ENCODE measurements at regions of chr15 and their contacts with region 1.

Region 1: DNA sequence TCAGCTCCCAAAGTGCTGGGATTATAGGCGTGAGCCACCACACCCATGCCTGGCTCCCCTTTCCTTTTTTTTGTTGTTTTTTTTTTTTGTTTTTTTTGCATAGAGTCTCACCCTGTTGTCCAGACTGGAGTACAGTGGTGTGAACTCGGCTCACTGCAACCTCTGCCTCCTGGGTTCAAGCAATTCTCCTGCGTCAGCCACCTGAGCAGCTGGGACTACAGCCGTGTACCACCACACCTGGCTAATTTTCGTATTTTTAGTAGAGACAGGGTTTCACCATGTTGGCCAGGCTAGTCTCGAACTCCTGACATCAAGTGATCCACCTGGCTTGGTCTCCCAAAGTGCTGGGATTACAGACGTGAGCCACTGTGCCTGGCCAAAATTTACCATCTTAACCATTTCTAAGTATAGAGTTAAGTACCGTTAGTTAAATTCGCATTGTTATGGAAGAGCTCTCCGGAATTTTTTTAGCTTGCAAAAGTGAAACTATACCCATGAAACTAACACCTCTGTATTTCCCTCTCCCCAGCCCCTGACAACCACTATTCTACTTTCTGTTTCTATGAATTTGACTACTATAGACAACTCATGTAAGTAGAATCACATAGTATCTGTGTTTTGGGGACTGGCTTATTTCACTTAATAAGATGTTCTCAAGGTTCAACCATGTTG is 70.9 kb upstream of the C15orf39 start:
- DNase-seq: peak in 2 of 3 donors; percentile 44 to 76
- H3K4me3 ChIP-seq: peak overlapping the region; percentile 2 to 69 (median 7)
- H3K4me3 Mint-ChIP-seq: peak overlapping the region; percentile 70 to 78
- H3K27ac ChIP-seq: peak overlapping the region; percentile 90 to 91
- H3K27ac Mint-ChIP-seq: peak overlapping the region; percentile 96 to 99 (median 97)
- H3K4me1 ChIP-seq: peaks cover 72 to 81% of the 10 kb centered on the region in 2 donors
- H3K4me1 Mint-ChIP-seq: peaks cover 69% of the 10 kb centered on the region
- H3K27me3 ChIP-seq: no peaks in the 10 kb centered on the region
- H3K27me3 Mint-ChIP-seq: no peaks in the 10 kb centered on the region
- CTCF ChIP-seq: no peak

Region 2: GRCh38 chr15:75104804-75105535 is 25.8 kb before region 1 on chr15:
- intact Hi-C with region 1: loop called (anchors 2 kb)
- DNase-seq: peak; percentile 88 to 95 (median 95)
- H3K4me3 ChIP-seq: peak overlapping the region in 1 of 3 experiments; percentile 26
- H3K4me3 Mint-ChIP-seq: peak overlapping the region; percentile 32 to 44
- H3K27ac ChIP-seq: peak overlapping the region; percentile 77 to 93
- H3K27ac Mint-ChIP-seq: peak overlapping the region; percentile 87 to 97 (median 94)
- H3K4me1 ChIP-seq: peaks cover 53 to 57% of the 10 kb centered on the region in 2 donors
- H3K4me1 Mint-ChIP-seq: peaks cover 61% of the 10 kb centered on the region
- H3K27me3 ChIP-seq: no peaks in the 10 kb centered on the region
- H3K27me3 Mint-ChIP-seq: peaks cover 0 to 5% (median 0%) of the 10 kb centered on the region in 3 donors
- CTCF ChIP-seq: no peak

Region 3: DNA sequence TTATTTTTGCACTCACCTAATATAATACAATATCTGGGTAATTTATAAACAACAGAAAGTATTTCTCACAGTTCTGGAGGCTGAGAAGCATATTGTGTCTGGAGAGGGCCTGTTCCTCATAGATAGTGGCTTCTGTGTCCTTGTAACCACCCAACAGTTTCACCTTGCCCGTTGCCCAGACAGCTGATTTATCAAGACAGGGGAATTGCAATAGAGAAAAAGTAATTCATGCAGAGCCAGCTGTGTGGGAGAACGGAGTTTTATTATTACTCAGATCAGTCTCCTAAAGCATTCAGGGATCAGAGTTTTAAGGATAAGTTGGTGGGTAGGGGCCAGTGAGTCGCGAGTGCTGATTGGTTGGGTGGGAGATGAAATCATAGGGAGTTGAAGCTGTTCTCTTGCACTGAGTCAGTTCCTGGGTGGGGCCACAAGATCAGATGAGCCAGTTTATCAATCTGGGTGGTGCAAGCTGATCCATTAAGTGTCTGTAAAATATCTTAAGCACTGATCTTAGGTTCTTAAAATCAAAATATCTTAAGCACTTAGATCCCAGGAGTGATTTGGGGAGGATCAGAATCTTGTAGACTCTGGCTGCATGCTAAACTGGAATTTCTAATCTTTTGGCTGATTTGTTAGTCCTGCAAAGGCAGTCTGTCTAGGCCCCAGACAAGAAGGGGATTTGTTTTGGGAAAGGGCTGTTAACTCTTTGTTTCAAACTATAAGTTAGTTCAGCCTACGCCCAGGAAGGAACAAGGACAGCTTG is 37.0 kb after region 1 on chr15:
- intact Hi-C with region 1: loop called in 1 of 2 experiments (anchors 5 kb)
- DNase-seq: peak; percentile 46 to 84 (median 65)
- H3K4me3 ChIP-seq: no peak overlapping the region
- H3K4me3 Mint-ChIP-seq: peak overlapping the region in 1 of 2 donors; percentile 39
- H3K27ac ChIP-seq: peak overlapping the region in 1 of 2 donors; percentile 55
- H3K27ac Mint-ChIP-seq: peak overlapping the region in 5 of 7 donors; percentile 15 to 60 (median 35)
- H3K4me1 ChIP-seq: peaks cover 49 to 65% of the 10 kb centered on the region in 2 donors
- H3K4me1 Mint-ChIP-seq: peaks cover 56% of the 10 kb centered on the region
- H3K27me3 ChIP-seq: no peaks in the 10 kb centered on the region
- H3K27me3 Mint-ChIP-seq: peaks cover 0 to 1% (median 0%) of the 10 kb centered on the region in 3 donors
- CTCF ChIP-seq: no peak

Region 4: DNA sequence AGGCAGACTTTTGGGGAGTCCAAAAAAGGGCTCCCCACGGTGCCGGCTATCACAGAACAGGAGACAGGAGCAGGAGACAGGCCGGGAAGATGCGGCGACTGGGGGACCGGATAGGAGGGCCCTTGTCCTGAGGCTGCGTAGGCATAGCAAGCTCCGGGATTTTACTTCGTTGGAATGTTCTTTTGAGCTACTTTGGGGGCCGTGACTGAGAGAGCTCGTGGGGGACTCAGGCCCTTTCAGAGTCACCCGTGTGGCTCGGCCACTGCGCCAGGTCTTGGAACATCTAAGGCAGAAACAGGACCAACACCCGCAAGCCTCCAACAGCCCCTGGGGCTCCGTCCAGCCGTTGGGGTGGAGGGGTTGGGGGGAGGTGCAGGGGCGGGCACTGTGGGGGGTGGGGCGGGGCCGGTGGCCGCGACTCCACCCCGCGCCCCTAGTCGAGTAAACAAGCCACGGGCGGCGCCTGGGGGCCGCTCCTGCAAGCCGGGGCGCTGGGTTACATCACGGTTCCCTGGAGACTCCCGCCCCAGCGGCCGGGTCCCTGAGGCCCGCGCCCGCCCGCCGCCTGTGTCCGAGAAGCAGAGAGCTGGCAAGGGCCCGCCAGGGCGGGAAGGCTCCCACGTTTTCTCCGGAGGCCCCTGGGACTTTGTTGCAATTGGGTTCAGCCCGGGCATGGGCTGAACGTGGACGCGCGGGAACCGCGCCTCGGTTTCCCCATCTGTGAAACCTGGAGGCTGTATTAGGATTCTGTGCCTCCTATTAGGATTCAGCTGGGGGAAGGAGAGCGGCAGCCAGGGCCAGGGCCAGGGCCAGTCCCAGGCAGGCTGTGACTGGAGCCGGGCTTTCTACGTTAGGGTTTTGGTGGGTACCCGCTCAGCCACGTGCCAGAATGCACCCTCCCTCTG is 47.7 kb after region 1 on chr15:
- intact Hi-C with region 1: loop called in 1 of 2 experiments (anchors 10 kb)
- DNase-seq: peak in 2 of 3 donors; percentile 38 to 41
- H3K4me3 ChIP-seq: peak overlapping the region; percentile 11 to 73 (median 41)
- H3K4me3 Mint-ChIP-seq: peak overlapping the region; percentile 69 to 91
- H3K27ac ChIP-seq: peak overlapping the region in 1 of 2 donors; percentile 35
- H3K27ac Mint-ChIP-seq: peak overlapping the region in 3 of 7 donors; percentile 25 to 70 (median 54)
- H3K4me1 ChIP-seq: peaks cover 67 to 74% of the 10 kb centered on the region in 2 donors
- H3K4me1 Mint-ChIP-seq: peaks cover 70% of the 10 kb centered on the region
- H3K27me3 ChIP-seq: peaks cover 0 to 22% of the 10 kb centered on the region in 2 donors
- H3K27me3 Mint-ChIP-seq: peaks cover 24 to 35% (median 29%) of the 10 kb centered on the region in 3 donors
- CTCF ChIP-seq: no peak

Region 5: DNA sequence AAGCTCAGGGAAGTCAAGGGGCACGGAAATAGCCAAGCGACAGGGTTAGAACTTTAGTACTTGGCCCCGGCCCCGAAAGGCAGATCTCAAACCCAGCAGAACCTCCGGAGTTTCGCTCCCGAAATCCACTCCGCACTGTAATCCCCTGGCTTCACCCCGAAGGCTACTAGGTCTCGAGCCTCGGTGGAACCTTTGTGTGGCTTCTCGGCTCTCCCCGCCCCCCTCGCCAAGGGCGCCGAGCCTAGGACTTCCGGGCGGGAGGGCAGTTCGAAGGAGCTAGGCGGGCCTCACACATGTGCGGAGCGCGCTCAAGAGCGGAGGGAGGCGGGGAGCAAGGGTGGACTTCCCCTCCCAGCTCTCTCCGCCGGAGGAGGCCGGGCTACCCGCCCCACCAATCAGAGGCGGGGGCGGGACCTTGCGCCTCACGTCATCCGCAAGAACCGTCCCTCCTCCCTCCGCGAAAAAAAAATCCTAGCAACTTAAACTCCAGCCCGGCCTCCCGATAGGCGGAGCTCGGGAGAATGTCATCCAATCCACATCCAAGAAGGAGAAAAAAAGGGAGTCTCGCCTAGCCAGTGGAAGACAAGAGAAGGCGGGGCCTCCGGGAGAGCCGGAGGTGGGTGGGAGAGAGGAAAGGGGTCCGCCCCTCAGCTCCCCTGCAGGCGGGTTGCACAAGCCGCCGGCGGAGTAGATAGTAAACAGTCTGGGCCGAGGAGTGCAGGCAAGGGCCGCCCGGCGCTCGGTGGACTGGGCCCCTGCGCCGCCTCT is 323.2 kb after region 1 on chr15:
- intact Hi-C with region 1: no loop called
- DNase-seq: peak; percentile 97 to 100 (median 99)
- H3K4me3 ChIP-seq: peak overlapping the region; percentile 81 to 95 (median 88)
- H3K4me3 Mint-ChIP-seq: peak overlapping the region; percentile 86 to 92
- H3K27ac ChIP-seq: peak overlapping the region; percentile 80 to 91
- H3K27ac Mint-ChIP-seq: peak overlapping the region; percentile 94 to 99 (median 97)
- H3K4me1 ChIP-seq: peaks cover 36 to 44% of the 10 kb centered on the region in 2 donors
- H3K4me1 Mint-ChIP-seq: peaks cover 37% of the 10 kb centered on the region
- H3K27me3 ChIP-seq: no peaks in the 10 kb centered on the region
- H3K27me3 Mint-ChIP-seq: peaks cover 0 to 2% (median 1%) of the 10 kb centered on the region in 3 donors
- CTCF ChIP-seq: no peak

Measured in CD14-positive monocyte (primary cell).